Ascending aorta (tissue), 2 donors: ENCODE measurements at regions of chr1 and their contacts with region 1.

Region 1: GRCh38 chr1:241611063-241611462 is 29.1 kb downstream of the CHML start:
- DNase-seq: no peak
- H3K4me3 ChIP-seq: no peak overlapping the region
- H3K27ac ChIP-seq: no peak overlapping the region
- H3K4me1 ChIP-seq: no peaks in the 10 kb centered on the region
- H3K27me3 ChIP-seq: no peaks in the 10 kb centered on the region
- CTCF ChIP-seq: peak; percentile 58 to 75 (median 60)

Region 2: GRCh38 chr1:240843798-240844197 is 767.3 kb before region 1 on chr1:
- intact Hi-C with region 1: no loop called
- DNase-seq: no peak
- H3K4me3 ChIP-seq: no peak overlapping the region
- H3K27ac ChIP-seq: no peak overlapping the region
- H3K4me1 ChIP-seq: no peaks in the 10 kb centered on the region
- H3K27me3 ChIP-seq: no peaks in the 10 kb centered on the region
- CTCF ChIP-seq: no peak

Region 3: DNA sequence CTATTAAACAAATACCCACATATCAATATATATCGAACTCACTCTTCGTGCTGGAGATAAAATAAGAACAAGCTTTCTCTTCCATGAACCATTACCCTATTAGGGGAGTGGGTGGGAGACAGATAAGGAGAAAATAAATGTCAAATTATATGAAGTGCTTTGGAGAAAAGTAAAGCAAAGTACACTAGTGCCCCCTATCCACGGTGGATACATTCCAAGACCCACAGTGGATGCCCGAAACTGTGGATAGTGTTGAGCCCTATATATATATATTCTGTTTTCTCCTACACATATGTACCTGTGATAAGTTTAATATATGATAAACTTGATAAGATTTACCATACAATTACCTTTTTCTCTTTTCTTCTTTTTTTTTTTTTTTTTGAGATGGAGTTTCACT is 146.1 kb before region 1 on chr1:
- intact Hi-C with region 1: no loop called
- DNase-seq: no peak
- H3K4me3 ChIP-seq: no peak overlapping the region
- H3K27ac ChIP-seq: no peak overlapping the region
- H3K4me1 ChIP-seq: no peaks in the 10 kb centered on the region
- H3K27me3 ChIP-seq: no peaks in the 10 kb centered on the region
- CTCF ChIP-seq: no peak

Region 4: GRCh38 chr1:241637046-241637980 is 26.2 kb after region 1 on chr1:
- intact Hi-C with region 1: no loop called
- DNase-seq: no peak
- H3K4me3 ChIP-seq: no peak overlapping the region
- H3K27ac ChIP-seq: no peak overlapping the region
- H3K4me1 ChIP-seq: peaks cover 0 to 9% of the 10 kb centered on the region in 2 donors
- H3K27me3 ChIP-seq: no peaks in the 10 kb centered on the region
- CTCF ChIP-seq: no peak

Region 5: DNA sequence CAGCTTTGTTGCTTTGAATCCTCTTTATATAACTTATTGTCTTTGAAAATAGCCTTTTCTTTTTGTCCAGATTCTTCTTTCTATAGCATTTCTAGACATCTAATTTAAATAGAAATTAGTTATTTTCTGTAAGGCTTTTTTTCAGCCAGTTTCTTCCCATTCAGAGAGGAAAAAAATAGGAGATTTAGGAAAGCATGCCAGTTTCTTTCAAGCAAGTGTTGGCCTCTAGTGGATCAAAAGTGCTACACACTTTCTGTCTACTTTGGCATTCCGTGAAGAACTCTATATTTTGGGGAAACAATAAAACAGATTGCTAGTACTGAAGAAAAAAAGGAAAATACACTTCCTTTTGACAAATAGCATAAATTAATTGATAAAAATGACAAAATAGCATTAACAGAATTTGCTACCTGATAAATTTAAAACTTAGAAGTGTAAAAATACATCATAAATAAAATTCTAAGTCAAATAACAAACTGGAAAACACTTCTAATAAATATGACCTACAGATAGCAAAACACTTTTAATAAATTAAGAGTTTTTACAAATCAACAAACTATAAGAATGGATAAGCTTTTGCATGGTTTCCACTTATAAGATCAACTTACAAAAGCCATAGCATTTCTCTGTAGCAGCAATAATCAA is 223.8 kb after region 1 on chr1:
- intact Hi-C with region 1: loop called (anchors 1 kb)
- DNase-seq: no peak
- H3K4me3 ChIP-seq: no peak overlapping the region
- H3K27ac ChIP-seq: no peak overlapping the region
- H3K4me1 ChIP-seq: no peaks in the 10 kb centered on the region
- H3K27me3 ChIP-seq: no peaks in the 10 kb centered on the region
- CTCF ChIP-seq: peak; percentile 49 to 76 (median 58)